ENCODE measurements at regions of chr5 and their contacts with region 1.

Region 1: GRCh38 chr5:22604711-22605110 is 248.4 kb downstream of the CDH12 start:
- DNase-seq: no peak

Region 2: DNA sequence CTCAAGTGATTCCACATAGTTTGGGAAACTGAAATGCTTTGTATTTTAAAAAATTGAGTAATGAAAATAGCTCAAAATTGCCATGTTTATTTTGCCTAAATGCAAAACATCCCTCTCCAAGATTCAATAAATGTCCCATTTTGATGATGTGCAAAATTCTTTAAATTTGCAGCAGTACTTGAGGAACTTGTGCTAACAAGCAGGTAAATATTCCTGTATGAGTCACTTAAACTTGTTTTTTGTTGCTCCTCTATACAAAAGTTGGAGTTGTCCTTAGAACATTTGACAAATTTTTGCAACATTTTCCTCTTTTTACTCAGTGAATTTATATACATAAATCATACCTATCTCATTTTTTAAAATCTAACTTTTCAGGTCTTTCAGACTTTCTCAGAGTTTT is 31.8 kb before region 1 on chr5:
- intact Hi-C with region 1: loop called (anchors 5 kb)
- DNase-seq: no peak